AG04450 (cell line): ENCODE measurements at regions of chrX and their contacts with region 1.

Region 1: GRCh38 chrX:100615005-100615404 is 21.6 kb downstream of the TSPAN6 start:
- DNase-seq: peak; percentile 10
- H3K4me3 ChIP-seq: no peak overlapping the region
- H3K27ac ChIP-seq: no peak overlapping the region
- H3K27me3 ChIP-seq: peaks cover 2% of the 10 kb centered on the region
- CTCF ChIP-seq: peak; percentile 69

Region 2: GRCh38 chrX:100625985-100626491 is 11.0 kb after region 1 on chrX:
- CTCF ChIA-PET with region 1: interaction called, 11 read pairs
- POLR2A ChIA-PET with region 1: no interaction called
- DNase-seq: no peak
- H3K4me3 ChIP-seq: no peak overlapping the region
- H3K27ac ChIP-seq: no peak overlapping the region
- H3K27me3 ChIP-seq: no peaks in the 10 kb centered on the region
- CTCF ChIP-seq: no peak

Region 3: DNA sequence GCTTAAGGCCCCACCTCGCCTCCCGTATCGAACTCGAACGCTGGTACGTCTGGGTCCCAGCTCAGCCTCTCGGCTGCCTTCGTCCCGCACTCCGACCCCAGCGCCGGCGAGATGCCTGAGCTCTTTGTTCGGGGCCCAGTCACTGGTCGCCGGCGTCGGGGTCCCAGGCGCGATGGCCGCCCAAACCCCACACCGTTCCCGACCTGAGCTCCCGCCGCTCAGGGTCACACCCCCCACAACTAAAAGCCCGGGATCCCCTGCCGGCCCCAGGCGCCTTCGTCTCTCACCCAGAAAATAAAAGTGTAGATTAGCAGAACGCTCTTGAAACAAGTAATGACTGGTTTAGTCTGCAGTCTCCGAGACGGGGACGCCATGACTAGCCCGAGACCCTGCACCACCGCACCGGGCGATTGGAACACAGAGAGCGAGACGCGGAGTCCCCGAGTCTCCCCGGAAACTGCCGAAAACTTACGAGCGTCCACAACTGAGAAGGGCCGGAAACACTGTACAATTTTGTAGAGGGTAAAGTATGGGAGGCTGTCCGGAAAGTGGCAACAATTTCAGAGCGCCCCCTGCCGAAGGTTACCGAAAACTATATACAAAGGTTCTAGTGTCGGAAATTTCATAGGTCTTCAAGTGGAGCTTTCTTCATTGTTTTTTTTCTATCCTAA is 21.5 kb after region 1 on chrX and contains the start of gene TSPAN6:
- CTCF ChIA-PET with region 1: interaction called, 28 read pairs
- POLR2A ChIA-PET with region 1: no interaction called
- DNase-seq: peak; percentile 57
- H3K4me3 ChIP-seq: peak within 1 kb of the TSS; percentile 70
- H3K27ac ChIP-seq: no peak within 1 kb of the TSS
- H3K27me3 ChIP-seq: no peaks in the 10 kb centered on the region
- CTCF ChIP-seq: peak; percentile 60
- polyA plus RNA-seq, gene TSPAN6: 38.4 and 49.1 TPM in 2 replicates

Region 4: DNA sequence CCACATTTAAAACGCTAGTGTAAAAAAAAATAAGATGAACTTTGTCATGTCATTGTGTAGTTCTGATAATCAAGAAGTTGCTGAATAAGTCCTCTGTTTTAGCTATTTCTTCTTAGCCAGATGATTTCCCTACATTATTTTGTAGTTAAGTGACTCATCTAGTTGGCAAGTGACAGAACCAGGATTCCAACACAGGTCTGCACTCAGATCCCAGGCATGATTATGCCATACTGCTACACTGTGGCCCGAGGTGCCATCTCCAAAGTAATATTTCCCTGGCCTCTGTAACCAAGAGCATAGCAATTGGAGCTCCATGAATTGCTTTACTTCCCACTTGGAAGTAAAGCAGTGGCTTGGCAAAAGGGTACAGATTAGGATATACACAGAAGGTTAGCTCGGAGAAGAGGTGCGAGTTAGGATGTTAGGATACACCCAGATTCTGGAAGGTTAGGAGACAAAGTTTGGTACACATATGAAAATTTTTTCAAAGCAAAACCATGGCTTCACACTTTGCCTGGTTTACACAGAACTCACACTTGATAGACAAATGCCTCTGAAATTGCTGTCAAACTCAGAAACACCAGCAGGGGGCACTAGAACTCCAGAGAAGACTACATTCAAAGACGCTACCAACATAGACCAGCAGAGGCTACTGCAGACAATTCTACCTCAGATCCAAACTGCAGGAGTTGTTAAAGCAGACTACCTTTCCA is 70.4 kb after region 1 on chrX:
- CTCF ChIA-PET with region 1: interaction called, 11 read pairs
- POLR2A ChIA-PET with region 1: no interaction called
- DNase-seq: peak; percentile 37
- H3K4me3 ChIP-seq: no peak overlapping the region
- H3K27ac ChIP-seq: no peak overlapping the region
- H3K27me3 ChIP-seq: no peaks in the 10 kb centered on the region
- CTCF ChIP-seq: peak; percentile 83